ENCODE measurements at regions of chr20 and their contacts with region 1.

Region 1: DNA sequence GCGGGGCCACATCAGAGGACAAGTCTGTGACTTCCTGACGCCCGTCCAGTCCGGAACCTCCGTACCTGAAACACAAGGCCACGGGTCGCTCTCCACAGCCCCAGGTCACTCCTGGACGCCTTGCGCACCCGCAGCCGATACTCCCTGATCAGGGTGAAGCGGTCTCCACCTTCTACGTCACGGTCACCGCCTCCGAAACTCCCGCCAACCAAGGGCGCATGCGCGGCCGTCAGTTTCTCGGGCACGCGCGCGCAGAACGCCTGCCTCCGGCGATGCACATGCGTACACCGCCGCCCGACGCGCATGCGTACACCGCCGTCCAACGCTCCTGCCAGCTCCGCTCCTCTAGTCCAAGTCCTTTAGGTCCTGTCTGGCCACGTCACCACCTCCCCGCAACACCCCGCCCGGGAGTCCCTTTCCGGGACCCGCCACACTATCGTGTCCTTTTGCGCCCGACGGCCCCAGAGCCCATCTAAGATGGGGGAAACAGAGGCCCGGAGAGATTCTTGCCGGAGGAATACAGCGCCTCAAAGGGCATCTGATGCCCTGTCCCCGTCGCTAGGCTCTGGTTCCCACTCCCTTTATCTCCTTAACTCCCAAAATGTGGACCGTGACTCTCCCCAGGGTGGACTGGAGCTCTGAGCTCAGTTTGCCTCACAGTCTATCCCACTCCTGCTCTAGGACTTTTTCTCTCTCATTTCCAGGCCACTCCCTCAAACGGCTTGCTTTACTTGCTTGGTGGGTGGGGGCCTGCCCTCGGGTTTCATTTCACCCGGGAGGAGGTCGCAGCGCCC is at the start of gene DSN1:
- DNase-seq: peak; percentile 99
- ATAC-seq: peak; percentile 87
- H3K4me3 Mint-ChIP-seq: peak within 1 kb of the TSS; percentile 91
- H3K27ac Mint-ChIP-seq: peak within 1 kb of the TSS; percentile 94
- H3K4me1 Mint-ChIP-seq: peaks cover 35% of the 10 kb centered on the region
- H3K27me3 Mint-ChIP-seq: peaks cover 2% of the 10 kb centered on the region
- CTCF ChIP-seq: no peak
- total RNA-seq, gene DSN1: 11.2 and 14.0 TPM in 2 replicates

Region 2: GRCh38 chr20:36506253-36506652 is 267.5 kb before region 1 on chr20:
- CTCF ChIA-PET with region 1: no interaction called
- POLR2A ChIA-PET with region 1: no interaction called
- intact Hi-C with region 1: loop called (anchors 10 kb)
- DNase-seq: no peak
- ATAC-seq: peak; percentile 56
- H3K4me3 Mint-ChIP-seq: no peak overlapping the region
- H3K27ac Mint-ChIP-seq: no peak overlapping the region
- H3K4me1 Mint-ChIP-seq: peaks cover 3% of the 10 kb centered on the region
- H3K27me3 Mint-ChIP-seq: no peaks in the 10 kb centered on the region
- CTCF ChIP-seq: no peak

Region 3: DNA sequence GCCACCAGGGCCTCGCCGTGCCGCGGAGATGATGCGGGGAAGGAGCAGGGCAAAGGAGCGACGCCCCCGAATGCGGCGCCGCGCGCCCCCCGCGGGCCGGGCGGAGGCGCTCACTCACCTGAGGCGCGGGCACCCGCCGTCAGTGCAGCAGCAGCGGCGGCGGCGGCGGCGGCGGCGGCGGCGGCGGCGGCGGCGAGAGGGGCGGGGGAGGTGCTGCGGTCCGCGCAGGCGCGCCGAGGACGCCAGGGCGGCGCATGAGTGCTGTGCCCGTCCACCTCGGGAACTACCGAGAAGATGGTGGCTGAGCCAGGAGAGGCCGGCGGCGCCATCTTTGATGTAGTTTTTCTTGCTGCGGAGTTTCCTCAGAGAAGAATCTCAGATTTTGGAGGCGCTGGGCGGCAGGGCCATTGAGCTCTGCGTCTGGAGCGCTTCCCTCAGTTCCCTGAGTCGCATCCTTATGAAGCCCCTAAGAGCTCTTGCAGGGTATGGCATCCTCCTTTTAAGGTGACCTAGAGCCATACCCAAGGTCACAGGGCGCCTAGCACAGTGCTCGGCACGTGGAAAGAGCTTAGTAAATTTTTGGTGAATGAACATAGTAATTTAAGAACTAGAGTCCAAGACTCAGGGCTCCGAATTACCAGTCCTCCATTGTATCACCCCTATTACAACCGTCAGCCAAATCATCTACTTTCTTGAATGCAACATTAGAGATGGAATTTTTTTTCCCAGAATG is 27.7 kb before region 1 on chr20 and contains the start of gene NDRG3:
- CTCF ChIA-PET with region 1: interaction called, 10 read pairs
- POLR2A ChIA-PET with region 1: interaction called, 8 read pairs
- intact Hi-C with region 1: loop called (anchors 1 kb)
- DNase-seq: peak; percentile 84
- ATAC-seq: peak; percentile 98
- H3K4me3 Mint-ChIP-seq: peak within 1 kb of the TSS; percentile 87
- H3K27ac Mint-ChIP-seq: peak within 1 kb of the TSS; percentile 88
- H3K4me1 Mint-ChIP-seq: peaks cover 16% of the 10 kb centered on the region
- H3K27me3 Mint-ChIP-seq: no peaks in the 10 kb centered on the region
- CTCF ChIP-seq: no peak
- total RNA-seq, gene NDRG3: 20.8 and 21.4 TPM in 2 replicates

Region 4: GRCh38 chr20:36835453-36836198 is 61.8 kb after region 1 on chr20:
- CTCF ChIA-PET with region 1: interaction called, 3 read pairs
- POLR2A ChIA-PET with region 1: interaction called, 13 read pairs
- intact Hi-C with region 1: no loop called
- DNase-seq: peak; percentile 72
- ATAC-seq: peak; percentile 92
- H3K4me3 Mint-ChIP-seq: peak overlapping the region; percentile 79
- H3K27ac Mint-ChIP-seq: peak overlapping the region; percentile 74
- H3K4me1 Mint-ChIP-seq: peaks cover 49% of the 10 kb centered on the region
- H3K27me3 Mint-ChIP-seq: no peaks in the 10 kb centered on the region
- CTCF ChIP-seq: no peak